PC-9 (cell line): ENCODE measurements at regions of chr12 and their contacts with region 1.

Region 1: DNA sequence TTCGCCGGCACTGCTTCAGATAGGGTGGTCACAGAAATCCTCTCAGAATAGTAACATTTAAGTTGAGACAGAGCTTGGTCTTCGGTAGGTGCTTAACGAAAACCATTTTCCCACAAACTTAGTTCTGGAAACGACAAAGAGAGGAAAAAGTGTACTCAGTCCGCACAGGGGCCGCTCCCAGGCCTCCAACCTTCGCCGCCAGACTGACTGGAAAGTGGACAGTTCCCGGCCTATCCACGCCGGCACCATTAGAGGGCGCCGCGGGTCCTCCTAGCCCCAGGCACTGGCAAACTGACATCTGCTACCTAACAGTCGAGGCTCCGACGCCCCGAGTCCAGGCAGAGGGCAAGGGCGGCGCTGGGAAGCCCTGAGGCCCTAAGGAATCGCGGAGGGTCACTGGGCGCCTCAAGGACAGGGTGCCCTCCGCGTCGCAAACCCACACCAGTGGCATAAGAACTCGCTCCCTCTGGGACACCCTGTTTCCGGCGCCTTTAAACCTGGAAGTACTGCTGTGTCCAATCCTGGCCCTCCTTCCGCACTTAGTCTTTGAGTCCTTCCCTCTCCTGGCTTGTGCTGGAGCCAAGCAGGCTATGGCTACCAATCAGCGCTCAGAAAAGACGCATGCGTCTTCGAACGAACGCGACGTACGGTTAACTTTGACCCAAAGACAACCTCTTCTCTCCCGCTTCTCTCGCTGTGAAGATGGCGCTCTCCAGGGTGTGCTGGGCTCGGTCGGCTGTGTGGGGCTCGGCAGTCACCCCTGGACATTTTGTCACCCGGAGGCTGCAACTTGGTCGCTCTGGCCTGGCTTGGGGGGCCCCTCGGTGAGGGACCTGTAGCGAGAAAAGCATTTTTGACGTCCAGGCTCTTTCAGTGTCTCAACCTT is at the start of gene LETMD1:
- DNase-seq: peak; percentile 89 to 96
- H3K4me3 ChIP-seq: peak within 1 kb of the TSS; percentile 94
- H3K27ac ChIP-seq: peak within 1 kb of the TSS; percentile 67
- H3K4me1 ChIP-seq: peaks cover 19% of the 10 kb centered on the region
- H3K27me3 ChIP-seq: no peaks in the 10 kb centered on the region
- CTCF ChIP-seq: peak; percentile 91
- total RNA-seq, gene LETMD1: 81.9 and 87.4 TPM in 2 replicates

Region 2: DNA sequence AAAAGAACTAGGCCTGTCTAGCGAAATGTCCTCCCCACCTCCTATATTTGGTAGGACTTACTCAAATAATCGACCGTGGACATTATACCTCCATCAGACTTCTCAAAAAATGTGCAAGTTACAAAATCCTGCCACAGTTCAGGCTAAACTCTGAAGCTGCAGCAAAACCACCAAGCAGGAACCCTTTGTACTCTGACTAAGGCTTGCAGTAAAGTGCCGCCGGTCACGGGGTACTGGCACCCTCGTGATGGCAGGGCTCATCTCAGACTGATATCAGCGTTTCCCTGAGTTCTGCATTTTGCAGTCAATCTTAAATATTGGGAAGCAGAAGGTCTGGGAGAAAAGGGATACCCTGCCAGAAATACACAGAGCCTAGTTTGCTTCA is 38.9 kb before region 1 on chr12:
- CTCF ChIA-PET with region 1: no interaction called
- POLR2A ChIA-PET with region 1: no interaction called
- intact Hi-C with region 1: loop called (anchors 5 kb)
- DNase-seq: no peak
- H3K4me3 ChIP-seq: no peak overlapping the region
- H3K27ac ChIP-seq: peak overlapping the region; percentile 9; the same call in 1 of the 2 replicates
- H3K4me1 ChIP-seq: peaks cover 22% of the 10 kb centered on the region
- H3K27me3 ChIP-seq: no peaks in the 10 kb centered on the region
- CTCF ChIP-seq: no peak

Region 3: GRCh38 chr12:51083126-51083833 is 35.4 kb after region 1 on chr12 and contains the start of gene CSRNP2:
- CTCF ChIA-PET with region 1: interaction called, 5 read pairs
- POLR2A ChIA-PET with region 1: no interaction called
- intact Hi-C with region 1: loop called (anchors 2 kb)
- DNase-seq: peak; percentile 89 to 96
- H3K4me3 ChIP-seq: peak within 1 kb of the TSS; percentile 84
- H3K27ac ChIP-seq: peak within 1 kb of the TSS; percentile 30
- H3K4me1 ChIP-seq: peaks cover 8% of the 10 kb centered on the region
- H3K27me3 ChIP-seq: no peaks in the 10 kb centered on the region
- CTCF ChIP-seq: no peak
- total RNA-seq, gene CSRNP2: 19.3 and 23.1 TPM in 2 replicates

Region 4: GRCh38 chr12:51210690-51211395 is 162.9 kb after region 1 on chr12:
- CTCF ChIA-PET with region 1: no interaction called
- POLR2A ChIA-PET with region 1: no interaction called
- intact Hi-C with region 1: no loop called
- DNase-seq: no peak
- H3K4me3 ChIP-seq: no peak overlapping the region
- H3K27ac ChIP-seq: no peak overlapping the region
- H3K4me1 ChIP-seq: no peaks in the 10 kb centered on the region
- H3K27me3 ChIP-seq: no peaks in the 10 kb centered on the region
- CTCF ChIP-seq: no peak

Region 5: DNA sequence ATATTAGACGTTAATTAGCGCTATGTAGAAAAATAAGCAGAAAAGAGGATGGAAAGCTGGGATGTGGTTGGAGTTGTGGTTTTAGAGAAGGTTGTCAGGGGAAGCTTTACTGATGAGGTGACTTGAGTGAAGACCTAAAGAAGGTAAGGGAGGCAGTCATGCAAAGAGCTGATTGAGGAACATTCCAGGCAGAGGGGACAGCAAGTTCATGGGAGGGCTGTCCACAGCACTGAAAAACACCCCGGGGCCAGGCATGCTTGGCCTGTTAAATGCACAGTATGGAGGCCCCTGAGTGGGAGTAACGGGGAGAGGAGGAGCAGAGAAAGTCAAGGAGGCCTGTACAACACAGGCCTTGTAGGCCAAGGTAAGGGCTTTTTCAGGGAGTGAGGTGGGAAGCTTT is 206.7 kb after region 1 on chr12:
- CTCF ChIA-PET with region 1: no interaction called
- POLR2A ChIA-PET with region 1: no interaction called
- intact Hi-C with region 1: loop called (anchors 5 kb)
- DNase-seq: no peak
- H3K4me3 ChIP-seq: no peak overlapping the region
- H3K27ac ChIP-seq: no peak overlapping the region
- H3K4me1 ChIP-seq: no peaks in the 10 kb centered on the region
- H3K27me3 ChIP-seq: no peaks in the 10 kb centered on the region
- CTCF ChIP-seq: no peak